ENCODE measurements at regions of chr2 and their contacts with region 1.

Region 1: DNA sequence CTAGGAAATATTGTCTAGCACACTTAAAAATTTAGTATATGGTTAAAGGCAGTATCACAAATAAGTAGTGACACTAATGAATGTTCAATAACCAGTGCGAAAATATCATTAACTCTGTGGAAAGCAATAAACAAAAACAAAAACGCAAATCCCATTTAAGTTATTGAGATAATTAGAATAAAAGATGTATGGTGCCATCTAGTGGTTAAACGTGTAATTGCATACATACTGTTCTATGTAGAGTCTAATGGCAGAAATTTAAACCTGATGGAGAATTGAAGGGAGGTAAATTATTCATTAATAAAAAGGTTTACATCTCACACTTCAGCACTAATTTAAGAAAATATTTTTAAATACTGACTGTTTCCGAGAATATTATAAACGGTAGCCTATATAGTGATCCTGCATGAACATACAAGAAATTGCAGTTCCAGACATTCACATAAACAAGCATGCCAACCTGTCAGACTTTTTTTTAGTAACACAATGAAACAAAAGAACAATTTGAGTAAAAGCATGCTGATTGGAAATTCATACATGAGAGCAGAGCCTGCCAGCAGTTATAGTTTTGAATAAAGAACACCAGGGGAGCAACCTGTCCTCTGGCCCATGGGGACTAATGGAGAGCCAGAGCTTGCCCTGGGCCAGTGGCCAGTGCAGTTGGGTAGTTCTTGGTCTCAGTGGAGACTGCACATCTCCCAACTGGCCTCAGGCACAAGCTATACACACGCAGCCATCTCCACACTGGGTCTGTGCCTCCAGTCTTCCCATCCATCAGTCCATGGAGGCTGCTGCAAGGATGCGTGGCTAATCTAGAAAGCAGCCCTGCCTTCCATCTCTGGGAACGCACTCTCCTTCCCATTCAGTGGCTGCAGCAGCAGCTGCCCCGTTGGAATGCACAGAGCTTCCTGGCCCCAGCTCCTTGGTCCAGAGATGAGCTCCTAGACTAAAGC is 28.0 kb downstream of the GCG start:
- DNase-seq: no peak
- ATAC-seq: peak; percentile 65
- H3K4me3 Mint-ChIP-seq: no peak overlapping the region
- H3K27ac Mint-ChIP-seq: no peak overlapping the region
- H3K4me1 Mint-ChIP-seq: peaks cover 6% of the 10 kb centered on the region
- H3K27me3 Mint-ChIP-seq: no peaks in the 10 kb centered on the region
- CTCF ChIP-seq: peak; percentile 81

Region 2: DNA sequence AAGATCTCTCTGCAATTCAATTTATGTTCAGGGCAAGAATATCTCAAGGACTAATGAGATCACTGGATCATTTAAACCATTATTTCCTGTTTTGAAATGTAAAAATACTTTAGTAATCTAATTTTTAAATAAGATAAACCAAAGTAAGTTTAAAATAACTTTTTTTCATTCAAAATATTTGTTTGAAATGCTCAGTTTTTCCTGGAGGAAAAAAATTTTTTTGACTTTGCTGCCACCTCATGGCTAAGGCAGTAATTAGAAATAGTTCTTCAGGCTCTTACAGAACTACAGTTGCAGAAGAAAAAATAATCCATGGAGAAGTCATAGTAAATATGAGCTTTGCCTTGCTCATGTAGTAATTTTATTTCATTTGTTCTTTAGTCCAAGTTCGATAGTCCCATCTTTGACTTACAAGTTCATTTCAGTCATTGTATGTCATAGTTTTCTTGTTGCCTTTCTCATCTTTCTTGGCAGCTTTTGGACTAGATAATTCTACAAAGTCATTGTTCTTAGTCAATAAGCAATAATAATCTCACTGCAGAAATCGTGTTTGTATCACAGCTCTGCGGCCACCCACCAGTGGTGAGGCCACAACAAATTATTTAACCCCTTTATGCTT is 177.5 kb before region 1 on chr2:
- CTCF ChIA-PET with region 1: interaction called, 44 read pairs
- POLR2A ChIA-PET with region 1: interaction called, 3 read pairs
- intact Hi-C with region 1: loop called (anchors 5 kb)
- DNase-seq: peak; percentile 17
- ATAC-seq: peak; percentile 64
- H3K4me3 Mint-ChIP-seq: no peak overlapping the region
- H3K27ac Mint-ChIP-seq: no peak overlapping the region
- H3K4me1 Mint-ChIP-seq: peaks cover 22% of the 10 kb centered on the region
- H3K27me3 Mint-ChIP-seq: no peaks in the 10 kb centered on the region
- CTCF ChIP-seq: peak; percentile 93

Region 3: GRCh38 chr2:162007447-162008040 is 116.5 kb before region 1 on chr2:
- CTCF ChIA-PET with region 1: interaction called, 18 read pairs
- POLR2A ChIA-PET with region 1: interaction called, 3 read pairs
- intact Hi-C with region 1: loop called (anchors 5 kb)
- DNase-seq: no peak
- ATAC-seq: no peak
- H3K4me3 Mint-ChIP-seq: no peak overlapping the region
- H3K27ac Mint-ChIP-seq: no peak overlapping the region
- H3K4me1 Mint-ChIP-seq: peaks cover 42% of the 10 kb centered on the region
- H3K27me3 Mint-ChIP-seq: no peaks in the 10 kb centered on the region
- CTCF ChIP-seq: peak; percentile 76

Region 4: DNA sequence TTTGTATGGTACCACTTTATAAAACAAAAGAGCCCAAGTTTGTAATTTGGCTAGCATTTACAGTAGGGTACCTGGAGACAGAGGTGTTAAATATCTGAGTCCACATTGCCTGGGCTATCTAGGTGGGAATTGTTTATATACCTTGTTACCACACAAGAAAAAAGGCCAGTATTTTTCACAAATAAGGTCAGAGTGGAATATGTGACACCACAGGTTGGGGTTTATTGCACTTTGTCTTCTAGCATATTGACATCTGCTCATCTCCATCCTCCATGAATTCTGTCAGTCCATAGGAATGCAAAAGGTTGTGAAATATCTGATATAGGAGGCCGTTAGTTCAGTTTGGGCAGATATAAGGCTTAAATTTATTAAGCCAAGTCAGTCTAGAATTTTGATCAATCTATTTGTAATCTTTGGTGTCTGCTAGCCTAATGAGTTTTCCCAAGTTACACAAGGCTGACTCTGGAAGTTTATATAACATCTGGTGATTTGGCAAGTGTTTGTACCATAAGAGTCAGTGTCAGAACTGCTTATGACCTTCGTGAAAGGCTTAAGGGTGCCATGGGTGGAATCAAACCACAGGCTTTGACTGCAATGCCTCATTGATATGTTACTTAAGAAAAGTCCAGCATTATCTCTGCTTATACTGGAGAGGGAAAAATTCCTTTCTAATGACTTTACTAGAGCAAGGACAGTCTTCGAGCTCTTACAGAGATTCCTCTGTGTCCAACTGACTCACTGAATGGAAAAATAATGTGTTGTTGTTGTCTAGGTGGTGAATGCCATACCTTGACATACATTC is 38.8 kb before region 1 on chr2:
- CTCF ChIA-PET with region 1: no interaction called
- POLR2A ChIA-PET with region 1: no interaction called
- intact Hi-C with region 1: no loop called
- DNase-seq: no peak
- ATAC-seq: no peak
- H3K4me3 Mint-ChIP-seq: no peak overlapping the region
- H3K27ac Mint-ChIP-seq: no peak overlapping the region
- H3K4me1 Mint-ChIP-seq: no peaks in the 10 kb centered on the region
- H3K27me3 Mint-ChIP-seq: no peaks in the 10 kb centered on the region
- CTCF ChIP-seq: no peak

Measured in activated CD8-positive, alpha-beta T cell treated with anti-CD3 and anti-CD28 coated beads for 36 hours (primary cell).